Activated T-helper 1 cell treated with anti-CD3 and anti-CD28 coated beads, Interleukin-12 subunit alpha, Interleukin-12 subunit beta, Interleukin-2, Interleukin-4 antibody, amounts not matched to agents 30 ng/mL and 10 ng/mL and 1 ng/mL, durations not matched to agents 14 hours and 24 hours and 36 hours (primary cell): ENCODE measurements at regions of chr1 and their contacts with region 1.

Region 1: GRCh38 chr1:218164111-218164929 is 120.8 kb upstream of the RRP15 start:
- DNase-seq: no peak
- H3K4me3 Mint-ChIP-seq: peak overlapping the region; percentile 79
- H3K27ac Mint-ChIP-seq: peak overlapping the region; percentile 43
- H3K4me1 Mint-ChIP-seq: peaks cover 15% of the 10 kb centered on the region
- H3K27me3 Mint-ChIP-seq: peaks cover 52% of the 10 kb centered on the region

Region 2: GRCh38 chr1:217134857-217135568 is 1029.3 kb before region 1 on chr1:
- intact Hi-C with region 1: loop called (anchors 5 kb)
- DNase-seq: no peak
- H3K4me3 Mint-ChIP-seq: no peak overlapping the region
- H3K27ac Mint-ChIP-seq: peak overlapping the region; percentile 55
- H3K4me1 Mint-ChIP-seq: no peaks in the 10 kb centered on the region
- H3K27me3 Mint-ChIP-seq: peaks cover 59% of the 10 kb centered on the region